Colonic mucosa (tissue), 4 donors: ENCODE measurements at regions of chr16 and their contacts with region 1.

Region 1: GRCh38 chr16:74034862-74035261 is 261.8 kb upstream of the PSMD7 start:
- DNase-seq: peak; percentile 25
- H3K4me3 ChIP-seq: no peak overlapping the region
- H3K27ac ChIP-seq: no peak overlapping the region
- H3K4me1 ChIP-seq: no peaks in the 10 kb centered on the region
- H3K27me3 ChIP-seq: no peaks in the 10 kb centered on the region
- CTCF ChIP-seq: peak; percentile 38

Region 2: DNA sequence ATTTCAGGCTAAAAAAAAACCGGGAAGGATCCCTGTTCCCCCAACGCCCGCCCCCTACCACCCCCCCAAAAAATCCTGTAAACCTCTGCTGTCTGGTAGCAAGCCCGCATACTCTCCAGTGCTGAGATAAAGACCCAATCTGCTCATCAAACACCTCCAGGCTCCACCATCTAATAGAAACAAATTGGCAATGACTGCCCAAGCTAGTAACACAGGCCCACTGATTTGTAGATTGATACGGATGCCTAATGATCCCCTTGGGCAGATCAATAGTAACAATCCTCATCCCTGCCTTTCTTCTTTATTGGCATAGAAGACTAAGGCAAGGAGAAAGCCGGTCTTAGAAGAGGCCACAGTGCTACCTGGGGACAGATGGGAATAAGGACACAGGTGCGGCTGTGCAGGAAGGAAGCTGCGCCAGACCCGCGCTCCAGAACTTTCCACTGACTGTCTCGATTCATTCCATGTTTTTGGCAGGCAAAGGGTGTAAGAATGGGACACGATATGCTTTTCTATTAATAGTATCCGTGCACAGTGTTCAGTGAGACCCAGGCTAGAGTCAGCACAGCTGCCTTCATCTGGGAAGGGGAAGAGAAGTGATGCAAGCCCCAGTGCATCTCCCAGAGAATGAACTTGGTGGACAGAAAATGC is 145.9 kb before region 1 on chr16:
- intact Hi-C with region 1: loop called (anchors 10 kb)
- DNase-seq: no peak
- H3K4me3 ChIP-seq: no peak overlapping the region
- H3K27ac ChIP-seq: no peak overlapping the region
- H3K4me1 ChIP-seq: no peaks in the 10 kb centered on the region
- H3K27me3 ChIP-seq: no peaks in the 10 kb centered on the region
- CTCF ChIP-seq: no peak

Region 3: DNA sequence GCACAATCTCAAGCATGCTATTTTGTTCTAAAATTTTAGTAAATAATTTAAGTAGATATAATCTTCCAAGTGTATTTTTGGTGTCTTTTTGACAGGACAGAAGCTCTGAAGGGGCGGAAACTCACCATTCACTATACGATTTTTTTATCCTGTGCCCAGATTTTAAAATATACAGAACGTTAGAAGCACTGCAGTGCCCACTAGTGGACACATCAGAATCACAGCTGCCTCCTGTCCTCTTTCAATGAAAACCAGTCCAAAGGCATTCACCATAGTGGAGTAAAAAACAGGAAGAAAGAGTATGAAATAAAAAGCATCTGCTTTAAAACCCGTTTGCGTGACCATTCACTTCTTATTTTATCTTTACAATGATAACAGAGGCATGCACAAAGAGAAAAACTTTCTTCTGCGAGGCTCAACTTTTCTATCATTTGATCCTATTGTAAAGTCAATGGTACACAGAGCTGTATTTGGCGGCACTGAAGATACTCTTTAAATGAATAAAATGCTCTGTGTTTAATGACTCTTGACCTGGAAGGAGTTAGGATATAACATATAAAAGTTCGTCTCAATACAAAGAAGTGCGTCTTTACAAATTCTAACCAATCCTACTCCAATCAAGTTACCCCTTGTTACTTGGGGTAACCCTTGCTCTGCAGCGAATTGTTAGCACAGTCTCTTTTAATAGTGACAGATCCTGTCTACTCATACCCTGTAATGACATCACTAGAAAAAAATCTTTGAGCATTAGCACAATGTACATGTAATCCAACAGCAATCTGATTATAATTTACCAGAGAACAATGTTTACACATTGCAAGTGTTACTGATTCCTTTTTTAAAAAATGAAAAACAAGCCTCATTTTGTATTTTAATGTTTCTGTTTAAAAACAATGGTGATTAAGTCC is 78.0 kb before region 1 on chr16:
- intact Hi-C with region 1: loop called (anchors 5 kb)
- DNase-seq: peak; percentile 62
- H3K4me3 ChIP-seq: no peak overlapping the region
- H3K27ac ChIP-seq: no peak overlapping the region
- H3K4me1 ChIP-seq: no peaks in the 10 kb centered on the region
- H3K27me3 ChIP-seq: no peaks in the 10 kb centered on the region
- CTCF ChIP-seq: peak; percentile 86

Region 4: DNA sequence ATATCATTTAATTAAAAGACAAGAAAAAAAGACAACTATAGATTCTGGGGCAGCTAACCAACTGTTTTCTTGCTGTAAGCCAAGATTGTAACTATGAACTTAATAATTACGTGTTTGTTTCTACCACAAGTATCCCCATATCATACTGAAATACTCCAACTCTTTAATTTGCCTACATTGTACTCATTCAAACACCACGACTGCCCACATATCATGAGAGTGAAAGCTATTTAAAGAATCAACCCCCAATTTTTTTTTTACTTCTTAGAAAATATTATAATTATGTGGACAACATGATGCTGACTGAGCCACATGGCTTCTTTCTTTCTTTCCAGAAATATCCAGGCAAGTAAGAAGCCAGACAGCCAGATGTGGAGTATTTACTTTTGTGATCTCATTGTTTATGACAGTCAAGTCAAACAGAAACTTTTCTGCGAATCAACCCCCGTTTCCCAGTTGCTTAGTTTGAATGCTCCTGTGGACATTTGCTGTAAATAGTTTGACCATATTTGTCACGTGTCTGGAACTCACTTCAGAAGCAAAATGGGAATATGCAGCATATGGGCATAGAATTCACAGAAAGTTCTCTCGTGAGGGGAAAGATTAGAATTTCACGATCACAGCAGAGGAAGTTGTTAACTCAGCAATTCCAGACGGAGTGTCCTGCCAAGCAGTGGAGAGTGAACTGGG is 135.0 kb after region 1 on chr16:
- intact Hi-C with region 1: no loop called
- DNase-seq: peak; percentile 20
- H3K4me3 ChIP-seq: no peak overlapping the region
- H3K27ac ChIP-seq: peak overlapping the region; percentile 16
- H3K4me1 ChIP-seq: no peaks in the 10 kb centered on the region
- H3K27me3 ChIP-seq: no peaks in the 10 kb centered on the region
- CTCF ChIP-seq: no peak